AG04449 (cell line): ENCODE measurements at regions of chr18 and their contacts with region 1.

Region 1: DNA sequence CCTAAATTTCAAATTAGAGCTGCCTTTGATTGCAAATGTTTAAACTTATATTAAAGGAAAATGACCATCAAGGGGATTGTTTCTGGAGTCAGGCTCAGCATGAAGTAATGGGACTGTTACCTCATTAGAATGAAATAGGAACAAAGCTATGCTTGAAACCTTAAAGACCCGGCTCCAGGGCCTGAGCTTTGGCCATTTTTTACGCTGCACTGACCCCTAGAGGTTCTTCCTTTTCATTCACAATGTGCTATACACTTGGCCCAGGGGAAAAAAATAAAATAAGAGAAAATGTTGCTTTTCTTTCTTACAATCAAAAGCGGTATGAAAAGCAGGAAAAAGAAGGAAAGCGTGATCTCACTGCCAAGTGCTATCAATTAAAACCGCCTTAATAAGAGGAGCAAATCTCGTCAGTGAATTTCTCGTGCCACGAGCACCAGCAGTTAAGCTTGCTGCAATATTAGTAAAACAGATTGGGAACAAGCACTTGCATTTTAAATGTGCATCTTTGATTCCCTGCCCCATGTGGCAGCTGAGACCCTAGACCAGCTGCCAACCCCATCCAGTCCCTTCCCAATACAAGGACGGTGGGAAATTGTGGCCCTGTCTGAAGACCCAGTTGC is 96.6 kb downstream of the MBD2 start:
- DNase-seq: no peak
- H3K4me3 ChIP-seq: no peak overlapping the region
- CTCF ChIP-seq: peak; percentile 47

Region 2: GRCh38 chr18:53567929-53568574 is 559.8 kb before region 1 on chr18:
- CTCF ChIA-PET with region 1: interaction called, 13 read pairs
- POLR2A ChIA-PET with region 1: no interaction called
- DNase-seq: no peak
- H3K4me3 ChIP-seq: no peak overlapping the region
- CTCF ChIP-seq: peak; percentile 35

Region 3: DNA sequence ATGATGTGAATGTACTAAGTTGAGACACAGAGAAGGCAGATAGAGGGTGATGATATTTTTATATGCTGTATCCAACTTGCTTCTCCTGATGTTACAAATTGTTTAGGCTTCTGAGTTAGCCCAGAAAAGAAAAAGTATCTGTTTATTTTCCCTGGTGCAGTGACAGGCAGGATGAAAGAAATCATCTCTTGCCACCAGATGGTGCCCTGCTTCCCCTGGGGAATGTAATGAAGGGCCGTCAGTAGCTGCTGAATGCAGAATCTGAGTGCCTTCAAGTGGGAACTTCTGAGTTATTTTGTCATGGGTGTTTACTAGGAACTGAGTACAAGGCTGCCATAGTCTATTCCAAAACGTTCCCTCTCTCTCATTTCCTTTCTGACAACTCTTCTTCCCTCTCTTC is 429.0 kb before region 1 on chr18:
- CTCF ChIA-PET with region 1: interaction called, 25 read pairs
- POLR2A ChIA-PET with region 1: no interaction called
- DNase-seq: peak; percentile 5
- H3K4me3 ChIP-seq: no peak overlapping the region
- CTCF ChIP-seq: peak; percentile 65

Region 4: DNA sequence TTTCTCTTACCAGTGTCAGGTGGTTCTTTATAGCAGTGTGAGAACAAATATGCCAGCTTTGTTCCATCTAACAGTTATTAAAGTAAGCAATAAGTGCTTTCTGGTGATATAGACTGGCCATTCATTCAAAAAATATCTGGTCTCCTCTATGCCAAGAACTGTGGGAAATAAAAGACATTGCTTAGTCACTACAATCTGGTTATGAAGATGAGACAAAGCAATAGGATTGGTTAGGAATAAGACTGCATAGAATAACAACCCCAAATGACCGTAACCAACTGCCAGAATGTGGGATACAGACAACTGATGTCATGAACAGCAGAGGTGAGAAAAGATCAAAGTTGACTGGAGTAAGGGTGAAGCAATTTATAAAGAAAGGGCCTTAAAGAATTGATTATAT is 12.8 kb after region 1 on chr18:
- CTCF ChIA-PET with region 1: interaction called, 10 read pairs
- POLR2A ChIA-PET with region 1: no interaction called
- DNase-seq: peak; percentile 51
- H3K4me3 ChIP-seq: no peak overlapping the region
- CTCF ChIP-seq: no peak

Region 5: GRCh38 chr18:54146542-54146941 is 18.7 kb after region 1 on chr18:
- CTCF ChIA-PET with region 1: interaction called, 10 read pairs
- POLR2A ChIA-PET with region 1: no interaction called
- DNase-seq: no peak
- H3K4me3 ChIP-seq: no peak overlapping the region
- CTCF ChIP-seq: no peak

Region 6: GRCh38 chr18:54269893-54270844 is 142.3 kb after region 1 on chr18:
- CTCF ChIA-PET with region 1: interaction called, 12 read pairs
- POLR2A ChIA-PET with region 1: no interaction called
- DNase-seq: no peak
- H3K4me3 ChIP-seq: peak overlapping the region; percentile 71
- CTCF ChIP-seq: peak; percentile 9